ENCODE measurements at regions of chr16 and their contacts with region 1.

Region 1: GRCh38 chr16:31700526-31701388 is 172.8 kb upstream of the ZNF267 start:
- DNase-seq: peak; percentile 86
- H3K4me3 ChIP-seq: peak overlapping the region; percentile 83 to 95 (median 93)
- H3K27ac ChIP-seq: peak overlapping the region; percentile 88
- H3K4me1 ChIP-seq: peaks cover 8% of the 10 kb centered on the region
- H3K27me3 ChIP-seq: no peaks in the 10 kb centered on the region
- CTCF ChIP-seq: no peak

Region 2: GRCh38 chr16:31196324-31197088 is 504.3 kb before region 1 on chr16:
- CTCF ChIA-PET with region 1: no interaction called
- dilution Hi-C with region 1: loop called (anchors 10 kb)
- in situ Hi-C with region 1: loop called in 1 of 2 experiments (anchors 25 kb)
- intact Hi-C with region 1: no loop called
- DNase-seq: no peak
- H3K4me3 ChIP-seq: no peak overlapping the region
- H3K27ac ChIP-seq: no peak overlapping the region
- H3K4me1 ChIP-seq: peaks cover 7% of the 10 kb centered on the region
- H3K27me3 ChIP-seq: no peaks in the 10 kb centered on the region
- CTCF ChIP-seq: no peak

Region 3: GRCh38 chr16:31382485-31383161 is 318.1 kb before region 1 on chr16:
- CTCF ChIA-PET with region 1: no interaction called
- dilution Hi-C with region 1: no loop called
- in situ Hi-C with region 1: no loop called
- intact Hi-C with region 1: loop called (anchors 5 kb)
- DNase-seq: peak; percentile 31
- H3K4me3 ChIP-seq: no peak overlapping the region
- H3K27ac ChIP-seq: no peak overlapping the region
- H3K4me1 ChIP-seq: peaks cover 19% of the 10 kb centered on the region
- H3K27me3 ChIP-seq: no peaks in the 10 kb centered on the region
- CTCF ChIP-seq: peak; percentile 70 to 93

Region 4: GRCh38 chr16:31458844-31459721 is 241.7 kb before region 1 on chr16 and contains the start of gene ARMC5:
- CTCF ChIA-PET with region 1: no interaction called
- dilution Hi-C with region 1: loop called (anchors 5 kb)
- in situ Hi-C with region 1: loop called in 1 of 2 experiments (anchors 5 kb)
- intact Hi-C with region 1: loop called (anchors 1 kb)
- DNase-seq: peak; percentile 97
- H3K4me3 ChIP-seq: peak within 1 kb of the TSS; percentile 79 to 93 (median 88)
- H3K27ac ChIP-seq: peak within 1 kb of the TSS; percentile 91
- H3K4me1 ChIP-seq: peaks cover 41% of the 10 kb centered on the region
- H3K27me3 ChIP-seq: no peaks in the 10 kb centered on the region
- CTCF ChIP-seq: peak; percentile 25 to 68
- total RNA-seq, gene ARMC5: 8.7 to 10.7 TPM

Region 5: GRCh38 chr16:31507929-31508705 is 192.6 kb before region 1 on chr16 and contains the start of gene RUSF1:
- CTCF ChIA-PET with region 1: no interaction called
- dilution Hi-C with region 1: no loop called
- in situ Hi-C with region 1: loop called in 1 of 2 experiments (anchors 10 kb)
- intact Hi-C with region 1: loop called (anchors 1 kb)
- DNase-seq: peak; percentile 79
- H3K4me3 ChIP-seq: peak within 1 kb of the TSS; percentile 92 to 99 (median 99)
- H3K27ac ChIP-seq: peak within 1 kb of the TSS; percentile 71
- H3K4me1 ChIP-seq: peaks cover 10% of the 10 kb centered on the region
- H3K27me3 ChIP-seq: no peaks in the 10 kb centered on the region
- CTCF ChIP-seq: no peak
- total RNA-seq, gene RUSF1: 40.5 to 46.5 TPM

Region 6: DNA sequence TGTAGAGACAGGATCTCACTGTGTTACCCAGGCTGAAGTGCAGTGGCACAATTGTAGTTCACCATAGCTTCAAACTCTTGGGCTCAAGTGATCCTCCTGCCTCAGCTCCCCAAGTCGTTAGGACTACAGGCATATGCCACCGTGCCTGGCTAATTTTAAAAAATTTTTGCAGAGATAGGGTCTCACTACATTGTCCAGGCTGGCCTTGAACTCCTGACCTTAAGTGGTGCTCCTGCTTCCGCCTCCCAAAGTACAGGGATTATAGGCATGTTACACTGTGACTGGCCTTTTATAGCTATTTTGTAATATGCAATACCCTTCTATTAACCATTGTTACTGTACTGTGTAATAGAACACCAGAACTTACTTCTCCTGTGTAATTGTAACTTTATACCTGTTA is 33.5 kb after region 1 on chr16:
- CTCF ChIA-PET with region 1: no interaction called
- dilution Hi-C with region 1: no loop called
- in situ Hi-C with region 1: no loop called
- intact Hi-C with region 1: no loop called
- DNase-seq: no peak
- H3K4me3 ChIP-seq: no peak overlapping the region
- H3K27ac ChIP-seq: no peak overlapping the region
- H3K4me1 ChIP-seq: no peaks in the 10 kb centered on the region
- H3K27me3 ChIP-seq: no peaks in the 10 kb centered on the region
- CTCF ChIP-seq: no peak

Region 7: GRCh38 chr16:31767267-31767666 is 66.5 kb after region 1 on chr16:
- CTCF ChIA-PET with region 1: no interaction called
- dilution Hi-C with region 1: no loop called
- in situ Hi-C with region 1: no loop called
- intact Hi-C with region 1: no loop called
- DNase-seq: no peak
- H3K4me3 ChIP-seq: no peak overlapping the region
- H3K27ac ChIP-seq: no peak overlapping the region
- H3K4me1 ChIP-seq: no peaks in the 10 kb centered on the region
- H3K27me3 ChIP-seq: no peaks in the 10 kb centered on the region
- CTCF ChIP-seq: no peak

Region 8: DNA sequence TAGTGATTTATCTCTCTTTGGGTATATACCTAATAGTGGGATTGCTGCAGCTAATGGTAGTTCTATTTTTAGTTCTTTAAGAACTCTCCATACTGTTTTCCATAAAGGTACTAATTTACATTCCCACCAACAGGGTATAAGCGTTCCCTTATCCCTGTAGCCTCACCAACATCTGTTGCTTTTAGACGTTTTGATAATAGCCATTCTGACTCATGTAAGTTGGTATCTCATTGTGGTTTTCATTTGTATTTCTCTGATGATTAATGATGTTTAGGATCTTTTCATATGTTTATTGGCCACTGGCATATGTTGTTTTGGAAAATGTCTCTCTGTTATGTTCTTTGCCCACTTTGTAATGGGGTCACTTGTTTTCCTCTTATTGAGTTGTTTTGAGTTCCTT is 84.4 kb after region 1 on chr16:
- CTCF ChIA-PET with region 1: no interaction called
- dilution Hi-C with region 1: no loop called
- in situ Hi-C with region 1: loop called in 1 of 2 experiments (anchors 25 kb)
- intact Hi-C with region 1: no loop called
- DNase-seq: no peak
- H3K4me3 ChIP-seq: no peak overlapping the region
- H3K27ac ChIP-seq: no peak overlapping the region
- H3K4me1 ChIP-seq: no peaks in the 10 kb centered on the region
- H3K27me3 ChIP-seq: no peaks in the 10 kb centered on the region
- CTCF ChIP-seq: no peak